CD8-positive, alpha-beta T cell (primary cell): ENCODE measurements at regions of chr7 and their contacts with region 1.

Region 1: GRCh38 chr7:148575640-148576411 is 14.7 kb upstream of the C7orf33 start:
- DNase-seq: peak; percentile 31 to 83 (median 71)
- ATAC-seq: peak; percentile 86
- H3K4me3 ChIP-seq: no peak overlapping the region
- H3K4me3 Mint-ChIP-seq: no peak overlapping the region
- H3K27ac ChIP-seq: no peak overlapping the region
- H3K27ac Mint-ChIP-seq: no peak overlapping the region
- H3K4me1 ChIP-seq: peaks cover 4% of the 10 kb centered on the region
- H3K4me1 Mint-ChIP-seq: peaks cover 2% of the 10 kb centered on the region
- H3K27me3 ChIP-seq: no peaks in the 10 kb centered on the region
- H3K27me3 Mint-ChIP-seq: peaks cover 2% of the 10 kb centered on the region
- CTCF ChIP-seq: peak; percentile 86

Region 2: DNA sequence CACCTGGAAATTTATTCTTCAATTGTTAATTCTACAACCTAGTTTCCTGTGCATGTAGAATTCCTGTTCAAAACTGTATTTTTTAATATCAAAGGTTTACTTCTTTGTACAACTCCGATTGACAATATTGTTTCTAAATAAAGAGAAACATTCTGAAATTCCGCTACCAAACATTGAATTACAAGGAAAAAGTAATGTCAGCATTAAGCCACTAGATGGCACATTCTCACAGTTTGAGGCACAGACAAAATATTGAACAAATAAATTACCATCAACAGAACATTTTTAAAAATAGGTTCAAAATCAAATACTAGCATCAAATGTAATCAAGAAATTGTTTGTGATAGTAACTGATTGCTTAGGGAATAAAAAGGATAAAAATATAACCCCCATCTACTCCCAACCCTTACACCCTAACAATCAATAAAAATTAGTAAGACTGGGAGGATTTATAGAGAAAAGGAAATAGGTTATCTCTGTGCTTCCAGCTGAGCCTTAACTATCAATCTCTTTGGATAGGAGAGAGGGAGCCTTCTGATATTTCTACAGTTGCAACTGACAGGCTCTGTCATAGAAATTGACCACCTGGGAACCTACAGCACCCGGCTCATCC is 71.8 kb before region 1 on chr7:
- CTCF ChIA-PET with region 1: interaction called, 4 read pairs
- POLR2A ChIA-PET with region 1: no interaction called
- intact Hi-C with region 1: loop called in 1 of 2 experiments (anchors 1 kb)
- DNase-seq: peak in 3 of 9 experiments; percentile 7 to 62 (median 52)
- ATAC-seq: no peak
- H3K4me3 ChIP-seq: no peak overlapping the region
- H3K4me3 Mint-ChIP-seq: no peak overlapping the region
- H3K27ac ChIP-seq: no peak overlapping the region
- H3K27ac Mint-ChIP-seq: no peak overlapping the region
- H3K4me1 ChIP-seq: no peaks in the 10 kb centered on the region
- H3K4me1 Mint-ChIP-seq: no peaks in the 10 kb centered on the region
- H3K27me3 ChIP-seq: no peaks in the 10 kb centered on the region
- H3K27me3 Mint-ChIP-seq: peaks cover 12% of the 10 kb centered on the region
- CTCF ChIP-seq: peak; percentile 92

Region 3: GRCh38 chr7:148527707-148528168 is 48.1 kb before region 1 on chr7:
- CTCF ChIA-PET with region 1: no interaction called
- POLR2A ChIA-PET with region 1: no interaction called
- intact Hi-C with region 1: no loop called
- DNase-seq: peak; percentile 67 to 91 (median 80)
- ATAC-seq: peak; percentile 100
- H3K4me3 ChIP-seq: no peak overlapping the region
- H3K4me3 Mint-ChIP-seq: no peak overlapping the region
- H3K27ac ChIP-seq: no peak overlapping the region
- H3K27ac Mint-ChIP-seq: no peak overlapping the region
- H3K4me1 ChIP-seq: no peaks in the 10 kb centered on the region
- H3K4me1 Mint-ChIP-seq: no peaks in the 10 kb centered on the region
- H3K27me3 ChIP-seq: no peaks in the 10 kb centered on the region
- H3K27me3 Mint-ChIP-seq: peaks cover 40% of the 10 kb centered on the region
- CTCF ChIP-seq: peak; percentile 71

Region 4: GRCh38 chr7:148563583-148564274 is 12.1 kb before region 1 on chr7:
- CTCF ChIA-PET with region 1: interaction called, 27 read pairs
- POLR2A ChIA-PET with region 1: interaction called, 3 read pairs
- intact Hi-C with region 1: no loop called
- DNase-seq: no peak
- ATAC-seq: no peak
- H3K4me3 ChIP-seq: no peak overlapping the region
- H3K4me3 Mint-ChIP-seq: peak overlapping the region; percentile 33
- H3K27ac ChIP-seq: peak overlapping the region in 1 of 2 experiments; percentile 27
- H3K27ac Mint-ChIP-seq: no peak overlapping the region
- H3K4me1 ChIP-seq: no peaks in the 10 kb centered on the region
- H3K4me1 Mint-ChIP-seq: peaks cover 16% of the 10 kb centered on the region
- H3K27me3 ChIP-seq: peaks cover 0 to 2% of the 10 kb centered on the region in 2 experiments
- H3K27me3 Mint-ChIP-seq: peaks cover 10% of the 10 kb centered on the region
- CTCF ChIP-seq: no peak

Region 5: DNA sequence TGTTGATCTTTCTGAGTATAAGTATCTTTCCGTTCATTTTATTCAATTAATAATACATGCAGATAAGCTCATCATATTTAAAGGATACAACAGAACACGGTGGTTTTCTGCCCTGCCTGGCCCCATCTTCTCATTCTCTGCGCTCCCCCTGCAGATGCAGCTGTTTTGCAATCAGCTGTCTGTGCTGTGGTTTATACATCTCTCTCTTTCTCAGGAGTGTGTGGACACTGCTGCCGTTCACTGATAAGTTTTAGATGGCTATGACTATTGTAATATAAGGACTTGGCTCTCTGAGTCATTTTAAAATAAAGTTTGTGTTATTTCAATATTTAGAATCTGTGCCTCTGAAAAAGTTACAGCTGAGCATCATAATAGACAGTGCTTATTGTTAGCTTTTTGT is 177.4 kb after region 1 on chr7:
- CTCF ChIA-PET with region 1: interaction called, 3 read pairs
- POLR2A ChIA-PET with region 1: no interaction called
- intact Hi-C with region 1: loop called in 1 of 2 experiments (anchors 10 kb)
- DNase-seq: no peak
- ATAC-seq: no peak
- H3K4me3 ChIP-seq: no peak overlapping the region
- H3K4me3 Mint-ChIP-seq: no peak overlapping the region
- H3K27ac ChIP-seq: no peak overlapping the region
- H3K27ac Mint-ChIP-seq: no peak overlapping the region
- H3K4me1 ChIP-seq: no peaks in the 10 kb centered on the region
- H3K4me1 Mint-ChIP-seq: peaks cover 11% of the 10 kb centered on the region
- H3K27me3 ChIP-seq: no peaks in the 10 kb centered on the region
- H3K27me3 Mint-ChIP-seq: no peaks in the 10 kb centered on the region
- CTCF ChIP-seq: no peak

Region 6: DNA sequence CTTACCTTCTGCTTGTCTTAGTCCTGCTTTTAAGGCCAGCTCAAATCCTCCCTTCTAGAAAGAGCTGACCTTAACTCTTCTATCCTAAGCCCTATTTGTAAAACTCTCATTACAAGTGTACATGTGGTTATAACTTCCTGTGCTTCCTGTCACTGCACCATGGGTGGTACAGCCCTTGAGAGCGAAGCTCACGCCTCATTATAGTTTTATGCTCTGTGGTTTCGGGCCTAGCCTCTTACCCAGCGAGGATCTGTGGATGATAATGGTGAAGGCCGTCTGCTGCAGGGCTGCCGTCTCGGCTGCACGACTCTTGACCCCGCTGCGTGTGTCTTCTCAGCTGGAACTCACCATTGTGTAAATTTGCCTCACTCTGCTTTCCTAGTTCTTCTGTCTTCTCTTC is 197.5 kb after region 1 on chr7:
- CTCF ChIA-PET with region 1: interaction called, 4 read pairs
- POLR2A ChIA-PET with region 1: interaction called, 3 read pairs
- intact Hi-C with region 1: loop called in 1 of 2 experiments (anchors 5 kb)
- DNase-seq: peak; percentile 2 to 76 (median 37)
- ATAC-seq: peak; percentile 90
- H3K4me3 ChIP-seq: no peak overlapping the region
- H3K4me3 Mint-ChIP-seq: peak overlapping the region; percentile 68
- H3K27ac ChIP-seq: peak overlapping the region; percentile 12 to 71
- H3K27ac Mint-ChIP-seq: peak overlapping the region; percentile 89
- H3K4me1 ChIP-seq: peaks cover 20% of the 10 kb centered on the region
- H3K4me1 Mint-ChIP-seq: peaks cover 30% of the 10 kb centered on the region
- H3K27me3 ChIP-seq: no peaks in the 10 kb centered on the region
- H3K27me3 Mint-ChIP-seq: no peaks in the 10 kb centered on the region
- CTCF ChIP-seq: no peak

Region 7: DNA sequence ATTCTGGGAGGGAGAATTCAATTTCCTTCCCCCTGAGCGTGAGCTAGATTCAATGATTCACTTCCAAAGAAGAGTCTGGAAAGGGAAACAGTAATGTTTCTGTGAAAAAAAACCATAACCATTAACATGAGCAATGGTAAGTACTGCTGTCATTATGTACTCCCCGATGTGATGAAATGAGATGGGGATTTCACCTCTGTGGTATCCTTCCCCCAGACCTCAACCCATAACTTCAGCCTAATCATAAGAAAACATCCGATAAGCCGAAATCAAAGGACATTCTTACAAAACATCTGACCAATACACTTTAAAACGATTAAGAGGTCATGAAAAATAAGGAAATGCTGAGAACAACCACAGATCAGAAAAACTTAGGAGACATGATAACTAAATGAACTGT is 281.1 kb after region 1 on chr7:
- CTCF ChIA-PET with region 1: interaction called, 11 read pairs
- POLR2A ChIA-PET with region 1: no interaction called
- intact Hi-C with region 1: loop called in 1 of 2 experiments (anchors 10 kb)
- DNase-seq: peak in 2 of 9 experiments; percentile 34 to 47
- ATAC-seq: no peak
- H3K4me3 ChIP-seq: no peak overlapping the region
- H3K4me3 Mint-ChIP-seq: no peak overlapping the region
- H3K27ac ChIP-seq: no peak overlapping the region
- H3K27ac Mint-ChIP-seq: no peak overlapping the region
- H3K4me1 ChIP-seq: no peaks in the 10 kb centered on the region
- H3K4me1 Mint-ChIP-seq: peaks cover 12% of the 10 kb centered on the region
- H3K27me3 ChIP-seq: no peaks in the 10 kb centered on the region
- H3K27me3 Mint-ChIP-seq: no peaks in the 10 kb centered on the region
- CTCF ChIP-seq: no peak

Region 8: DNA sequence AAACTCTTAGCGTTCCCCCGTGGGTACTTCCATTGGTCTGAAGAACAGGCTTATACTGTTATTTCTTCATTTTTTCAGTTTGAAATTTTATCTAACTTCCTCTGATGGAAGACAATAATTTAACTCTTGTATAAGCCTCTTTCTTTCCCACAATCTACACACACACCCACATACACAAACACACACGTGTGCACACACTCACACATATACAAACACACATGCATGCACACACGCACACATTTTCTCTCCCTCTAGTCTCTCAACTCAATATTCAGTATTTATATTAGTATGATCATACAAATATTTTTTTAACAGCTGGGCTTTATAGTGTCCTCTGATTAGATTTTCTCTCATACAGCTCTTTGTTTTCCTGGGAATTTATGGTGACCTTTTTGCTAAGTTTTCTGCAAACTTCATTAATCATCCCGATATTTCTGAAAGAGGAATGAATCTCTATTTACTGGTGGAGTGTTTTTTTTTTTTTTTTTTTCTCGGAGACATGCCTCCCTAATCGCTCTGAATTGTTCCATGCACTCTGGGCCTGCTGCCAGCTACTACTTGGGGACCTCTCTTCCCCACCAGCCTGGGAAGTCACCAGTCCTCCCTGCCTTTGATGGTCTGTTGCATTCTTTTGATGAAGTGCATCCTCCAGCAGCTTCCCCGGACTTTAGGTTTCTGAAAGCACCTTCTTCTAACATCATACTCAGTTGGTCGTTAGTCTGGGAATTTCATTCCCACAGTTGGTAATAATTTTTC is 809.5 kb after region 1 on chr7:
- CTCF ChIA-PET with region 1: no interaction called
- POLR2A ChIA-PET with region 1: no interaction called
- intact Hi-C with region 1: no loop called
- DNase-seq: no peak
- ATAC-seq: no peak
- H3K4me3 ChIP-seq: no peak overlapping the region
- H3K4me3 Mint-ChIP-seq: no peak overlapping the region
- H3K27ac ChIP-seq: no peak overlapping the region
- H3K27ac Mint-ChIP-seq: no peak overlapping the region
- H3K4me1 ChIP-seq: no peaks in the 10 kb centered on the region
- H3K4me1 Mint-ChIP-seq: no peaks in the 10 kb centered on the region
- H3K27me3 ChIP-seq: no peaks in the 10 kb centered on the region
- H3K27me3 Mint-ChIP-seq: peaks cover 19% of the 10 kb centered on the region
- CTCF ChIP-seq: no peak